ENCODE measurements at regions of chr12 and their contacts with region 1.

Region 1: DNA sequence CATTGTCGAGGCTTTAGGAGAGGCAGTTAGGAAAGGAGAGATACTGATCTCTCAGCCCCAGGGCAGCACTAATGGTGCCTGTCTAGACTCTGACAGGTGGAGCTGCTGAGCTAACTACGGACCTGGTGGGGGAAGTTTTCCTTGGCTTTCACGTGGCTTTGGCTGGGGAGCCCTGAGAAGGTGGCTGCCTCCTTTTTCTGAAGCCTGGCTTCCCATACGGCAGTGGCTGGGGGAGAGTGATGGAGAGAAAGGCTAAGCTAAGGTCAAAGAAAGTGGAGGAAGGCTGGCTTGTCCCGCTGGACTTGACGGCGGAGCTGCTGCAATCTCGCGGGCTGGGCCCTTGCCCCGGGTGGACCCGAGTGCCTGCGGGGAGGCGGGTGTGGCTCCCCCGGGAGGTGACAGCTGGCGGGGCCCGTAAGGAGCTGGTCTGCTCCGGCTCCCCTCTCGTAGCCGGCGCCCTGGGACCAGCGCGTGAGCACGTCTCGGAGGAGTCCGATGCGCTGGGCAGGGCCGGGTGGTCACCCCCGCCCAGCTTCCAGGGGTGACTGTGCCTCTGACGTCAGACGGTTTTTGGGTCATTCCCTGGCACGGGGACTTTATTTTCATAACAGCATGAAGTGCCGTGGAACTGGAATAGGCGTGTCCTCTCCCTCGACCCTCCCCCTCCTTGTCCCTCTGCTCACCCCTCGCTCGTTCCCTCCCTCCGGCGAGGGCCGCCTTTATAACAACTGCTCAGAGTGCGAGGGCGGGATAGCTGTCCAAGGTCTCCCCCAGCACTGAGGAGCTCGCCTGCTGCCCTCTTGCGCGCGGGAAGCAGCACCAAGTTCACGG is at the start of gene GPRC5A:
- DNase-seq: peak; percentile 96
- ATAC-seq: peak; percentile 80
- H3K4me3 ChIP-seq: peak within 1 kb of the TSS; percentile 59 to 91
- H3K27ac ChIP-seq: peak within 1 kb of the TSS; percentile 93
- H3K4me1 ChIP-seq: peaks cover 56 to 90% of the 10 kb centered on the region in 2 experiments
- H3K27me3 ChIP-seq: no peaks in the 10 kb centered on the region
- CTCF ChIP-seq: peak in 2 of 3 experiments; percentile 12 to 15; a peak in 1 of 6 replicates
- POLR2A ChIP-seq: peak; percentile 24
- RAD21 ChIP-seq: no peak
- total RNA-seq, gene GPRC5A: 305 TPM

Region 2: DNA sequence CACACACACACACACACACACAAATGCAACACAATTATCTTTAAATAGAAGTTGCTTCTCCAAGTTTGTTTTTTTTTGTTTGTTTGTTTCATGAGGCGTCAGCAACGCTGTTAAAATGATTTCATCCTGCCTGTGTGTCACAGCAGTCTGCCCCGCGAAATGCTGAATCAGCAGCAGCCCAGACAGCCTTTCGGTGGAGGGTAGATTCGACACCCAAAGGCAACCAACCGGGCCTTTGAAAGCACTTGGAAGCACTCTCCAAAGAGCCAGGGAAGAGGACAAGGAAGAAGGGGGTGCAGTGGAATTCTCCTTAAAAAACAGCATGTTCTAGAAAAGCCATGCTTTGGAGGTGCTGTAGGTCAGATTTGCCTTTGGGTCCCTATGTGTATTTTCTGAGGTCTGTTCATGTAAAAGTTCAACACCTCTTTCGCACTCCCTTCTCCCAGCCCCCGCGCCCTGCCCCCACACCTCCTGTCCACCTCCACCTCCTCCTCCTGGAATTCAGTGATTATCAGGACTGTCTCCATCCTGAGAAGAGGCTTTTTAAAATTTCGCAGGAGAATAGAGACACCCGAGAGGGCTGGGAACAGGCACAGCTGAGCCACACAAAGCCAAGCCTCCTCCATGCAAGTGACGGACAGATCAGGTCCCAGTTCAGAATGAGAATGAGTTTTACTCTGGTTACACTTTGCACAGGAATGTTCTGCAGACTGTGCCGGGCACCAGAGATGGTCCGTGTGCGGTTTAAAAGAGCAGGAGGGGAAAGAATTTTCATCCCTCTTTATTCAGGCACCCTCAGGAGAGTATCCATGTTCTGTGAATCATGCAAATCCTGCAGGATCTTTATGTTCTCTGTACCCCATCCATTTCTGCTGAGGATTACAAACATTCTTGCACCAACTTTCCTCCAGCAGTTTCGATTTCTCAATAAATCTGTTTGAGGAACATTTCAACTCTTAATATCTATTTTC is 1063.7 kb before region 1 on chr12:
- CTCF ChIA-PET with region 1: no interaction called
- POLR2A ChIA-PET with region 1: no interaction called
- RAD21 ChIA-PET with region 1: no interaction called
- intact Hi-C with region 1: no loop called
- DNase-seq: no peak
- ATAC-seq: no peak
- H3K4me3 ChIP-seq: no peak overlapping the region
- H3K27ac ChIP-seq: no peak overlapping the region
- H3K4me1 ChIP-seq: no peaks in the 10 kb centered on the region
- H3K27me3 ChIP-seq: no peaks in the 10 kb centered on the region
- CTCF ChIP-seq: no peak
- POLR2A ChIP-seq: no peak
- RAD21 ChIP-seq: no peak

Region 3: DNA sequence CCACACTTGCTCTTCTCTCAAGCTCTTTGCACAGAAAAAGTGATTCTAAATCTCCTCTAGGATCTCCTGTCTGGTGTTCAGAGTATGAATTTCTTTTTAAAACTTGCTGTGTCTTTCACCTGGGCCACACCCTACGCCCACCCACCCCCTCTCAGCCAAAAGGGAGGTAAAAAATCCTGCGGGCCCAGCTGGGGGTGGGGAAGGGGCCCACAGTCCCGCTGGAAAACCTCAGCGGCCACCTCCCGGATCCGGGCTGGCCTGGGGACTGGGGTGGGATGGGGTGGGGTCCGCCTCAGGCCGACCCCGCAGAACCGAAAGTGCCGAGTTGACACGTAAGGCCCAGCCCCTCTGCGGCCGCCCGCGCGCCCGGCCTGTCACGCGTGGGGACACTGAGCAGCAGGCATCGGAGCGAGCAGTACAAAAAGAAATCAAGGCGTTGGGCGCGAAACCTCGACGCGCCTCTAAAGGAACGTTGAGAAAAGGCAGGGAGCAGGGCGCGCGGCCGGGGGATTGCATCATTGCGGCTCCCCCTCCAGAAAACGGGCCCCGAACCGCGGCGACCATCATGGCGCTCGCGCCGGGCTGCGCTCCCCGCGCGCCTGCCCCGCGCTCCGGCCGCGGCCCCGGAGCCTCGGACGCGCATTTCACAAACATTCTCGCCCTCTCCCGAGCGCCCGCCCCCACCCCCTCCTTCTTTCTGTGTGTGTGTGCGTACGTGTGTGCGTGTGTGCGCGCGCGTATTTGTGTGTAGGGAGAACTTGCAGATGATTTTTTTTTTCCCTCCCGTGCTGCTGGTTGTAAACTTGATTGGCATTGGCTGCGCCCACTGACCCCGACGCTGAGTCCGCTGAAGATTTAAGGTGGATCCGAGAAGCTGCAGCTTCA is 166.1 kb before region 1 on chr12:
- CTCF ChIA-PET with region 1: no interaction called
- POLR2A ChIA-PET with region 1: interaction called, 3 read pairs
- RAD21 ChIA-PET with region 1: no interaction called
- intact Hi-C with region 1: loop called (anchors 10 kb)
- DNase-seq: peak; percentile 98
- ATAC-seq: peak; percentile 67
- H3K4me3 ChIP-seq: peak overlapping the region; percentile 62 to 81
- H3K27ac ChIP-seq: peak overlapping the region; percentile 100
- H3K4me1 ChIP-seq: peaks cover 27 to 33% of the 10 kb centered on the region in 2 experiments
- H3K27me3 ChIP-seq: no peaks in the 10 kb centered on the region
- CTCF ChIP-seq: no peak
- POLR2A ChIP-seq: peak; percentile 73
- RAD21 ChIP-seq: no peak

Region 4: DNA sequence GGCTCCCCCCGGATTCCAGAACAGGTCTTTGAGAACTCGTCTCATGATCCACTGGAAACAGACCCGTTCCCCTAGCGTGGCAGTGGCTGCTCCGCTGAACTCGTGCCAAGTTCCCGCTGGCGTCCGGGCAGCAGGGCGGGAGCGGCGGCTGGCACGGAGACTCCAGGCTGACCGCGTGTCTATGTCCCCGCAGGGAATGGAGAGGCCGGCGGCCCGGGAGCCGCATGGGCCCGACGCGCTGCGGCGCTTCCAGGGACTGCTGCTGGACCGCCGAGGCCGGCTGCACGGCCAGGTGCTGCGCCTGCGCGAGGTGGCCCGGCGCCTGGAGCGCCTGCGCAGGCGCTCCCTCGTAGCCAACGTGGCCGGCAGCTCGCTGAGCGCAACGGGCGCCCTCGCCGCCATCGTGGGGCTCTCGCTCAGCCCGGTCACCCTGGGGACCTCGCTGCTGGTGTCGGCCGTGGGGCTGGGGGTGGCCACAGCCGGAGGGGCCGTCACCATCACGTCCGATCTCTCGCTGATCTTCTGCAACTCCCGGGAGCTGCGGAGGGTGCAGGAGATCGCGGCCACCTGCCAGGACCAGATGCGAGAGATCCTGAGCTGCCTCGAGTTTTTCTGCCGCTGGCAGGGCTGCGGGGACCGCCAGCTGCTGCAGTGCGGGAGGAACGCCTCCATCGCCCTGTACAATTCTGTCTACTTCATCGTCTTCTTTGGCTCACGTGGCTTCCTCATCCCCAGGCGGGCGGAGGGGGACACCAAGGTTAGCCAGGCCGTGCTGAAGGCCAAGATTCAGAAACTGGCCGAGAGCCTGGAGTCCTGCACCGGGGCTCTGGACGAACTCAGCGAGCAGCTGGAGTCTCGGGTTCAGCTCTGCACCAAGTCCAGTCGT is 104.1 kb before region 1 on chr12:
- CTCF ChIA-PET with region 1: interaction called, 7 read pairs
- POLR2A ChIA-PET with region 1: interaction called, 4 read pairs
- RAD21 ChIA-PET with region 1: no interaction called
- intact Hi-C with region 1: loop called (anchors 5 kb)
- DNase-seq: no peak
- ATAC-seq: peak; percentile 83
- H3K4me3 ChIP-seq: peak overlapping the region; percentile 20 to 47
- H3K27ac ChIP-seq: peak overlapping the region; percentile 21; the same call in 1 of the 2 replicates
- H3K4me1 ChIP-seq: peaks cover 6 to 47% of the 10 kb centered on the region in 2 experiments; a peak in 3 of 4 replicates
- H3K27me3 ChIP-seq: no peaks in the 10 kb centered on the region
- CTCF ChIP-seq: no peak
- POLR2A ChIP-seq: no peak
- RAD21 ChIP-seq: no peak

Region 5: DNA sequence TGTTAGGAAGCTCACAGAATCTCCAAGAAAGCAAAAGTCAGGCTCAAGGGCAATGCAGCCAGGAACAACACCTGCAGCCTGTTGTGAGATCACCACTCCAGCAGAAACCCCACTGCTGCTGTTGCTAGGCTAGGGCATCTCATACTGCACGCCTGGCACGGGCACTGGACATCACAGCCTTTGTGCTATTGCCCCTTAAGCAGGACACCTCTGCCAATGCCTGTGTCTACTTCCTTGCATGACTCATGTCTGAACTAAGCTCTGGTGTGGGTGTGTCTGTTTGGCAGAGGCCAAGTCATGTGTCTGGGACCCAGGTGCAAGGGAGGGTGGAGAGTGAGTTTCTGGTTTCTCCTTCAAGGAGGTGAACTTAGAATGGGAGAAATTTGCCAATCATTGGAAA is 87.8 kb before region 1 on chr12:
- CTCF ChIA-PET with region 1: no interaction called
- POLR2A ChIA-PET with region 1: interaction called, 21 read pairs
- RAD21 ChIA-PET with region 1: no interaction called
- intact Hi-C with region 1: no loop called
- DNase-seq: peak; percentile 92
- ATAC-seq: peak; percentile 94
- H3K4me3 ChIP-seq: peak overlapping the region in 1 of 2 experiments; percentile 45; a peak in 2 of 4 replicates
- H3K27ac ChIP-seq: peak overlapping the region; percentile 40; the same call in 1 of the 2 replicates
- H3K4me1 ChIP-seq: peaks cover 34 to 64% of the 10 kb centered on the region in 2 experiments
- H3K27me3 ChIP-seq: no peaks in the 10 kb centered on the region
- CTCF ChIP-seq: no peak
- POLR2A ChIP-seq: no peak
- RAD21 ChIP-seq: peak; percentile 18; the same call in 1 of the 2 replicates

Region 6: GRCh38 chr12:12813120-12814101 is 77.6 kb before region 1 on chr12 and contains the start of gene DDX47:
- CTCF ChIA-PET with region 1: no interaction called
- POLR2A ChIA-PET with region 1: interaction called, 6 read pairs
- RAD21 ChIA-PET with region 1: interaction called in 1 of 2 experiments, 4 read pairs
- intact Hi-C with region 1: loop called (anchors 2 kb)
- DNase-seq: peak; percentile 82
- ATAC-seq: peak; percentile 93
- H3K4me3 ChIP-seq: peak within 1 kb of the TSS; percentile 91 to 95
- H3K27ac ChIP-seq: peak within 1 kb of the TSS; percentile 67
- H3K4me1 ChIP-seq: peaks cover 12 to 61% of the 10 kb centered on the region in 2 experiments; a peak in 3 of 4 replicates
- H3K27me3 ChIP-seq: no peaks in the 10 kb centered on the region
- CTCF ChIP-seq: peak; percentile 86 to 90 (median 88)
- POLR2A ChIP-seq: peak; percentile 65
- RAD21 ChIP-seq: peak; percentile 63
- total RNA-seq, gene DDX47: 103 TPM

Region 7: GRCh38 chr12:12837025-12837872 is 53.8 kb before region 1 on chr12:
- CTCF ChIA-PET with region 1: interaction called, 29 read pairs
- POLR2A ChIA-PET with region 1: interaction called, 66 read pairs
- RAD21 ChIA-PET with region 1: interaction called, 10 to 12 read pairs
- intact Hi-C with region 1: loop called (anchors 1 kb)
- DNase-seq: peak; percentile 67
- ATAC-seq: peak; percentile 38
- H3K4me3 ChIP-seq: no peak overlapping the region
- H3K27ac ChIP-seq: peak overlapping the region; percentile 85
- H3K4me1 ChIP-seq: peaks cover 77 to 99% of the 10 kb centered on the region in 2 experiments
- H3K27me3 ChIP-seq: no peaks in the 10 kb centered on the region
- CTCF ChIP-seq: peak; percentile 43 to 77 (median 71); a peak in 5 of 6 replicates
- POLR2A ChIP-seq: no peak
- RAD21 ChIP-seq: peak; percentile 86

Region 8: GRCh38 chr12:12872139-12872881 is 18.7 kb before region 1 on chr12:
- CTCF ChIA-PET with region 1: interaction called, 3 read pairs
- POLR2A ChIA-PET with region 1: interaction called, 56 read pairs
- RAD21 ChIA-PET with region 1: interaction called in 1 of 2 experiments, 3 read pairs
- intact Hi-C with region 1: loop called (anchors 1 kb)
- DNase-seq: peak; percentile 87
- ATAC-seq: peak; percentile 71
- H3K4me3 ChIP-seq: peak overlapping the region; percentile 24 to 42
- H3K27ac ChIP-seq: peak overlapping the region; percentile 88
- H3K4me1 ChIP-seq: peaks cover 68 to 91% of the 10 kb centered on the region in 2 experiments
- H3K27me3 ChIP-seq: no peaks in the 10 kb centered on the region
- CTCF ChIP-seq: no peak
- POLR2A ChIP-seq: no peak
- RAD21 ChIP-seq: peak; percentile 24; the same call in 1 of the 2 replicates

Region 9: DNA sequence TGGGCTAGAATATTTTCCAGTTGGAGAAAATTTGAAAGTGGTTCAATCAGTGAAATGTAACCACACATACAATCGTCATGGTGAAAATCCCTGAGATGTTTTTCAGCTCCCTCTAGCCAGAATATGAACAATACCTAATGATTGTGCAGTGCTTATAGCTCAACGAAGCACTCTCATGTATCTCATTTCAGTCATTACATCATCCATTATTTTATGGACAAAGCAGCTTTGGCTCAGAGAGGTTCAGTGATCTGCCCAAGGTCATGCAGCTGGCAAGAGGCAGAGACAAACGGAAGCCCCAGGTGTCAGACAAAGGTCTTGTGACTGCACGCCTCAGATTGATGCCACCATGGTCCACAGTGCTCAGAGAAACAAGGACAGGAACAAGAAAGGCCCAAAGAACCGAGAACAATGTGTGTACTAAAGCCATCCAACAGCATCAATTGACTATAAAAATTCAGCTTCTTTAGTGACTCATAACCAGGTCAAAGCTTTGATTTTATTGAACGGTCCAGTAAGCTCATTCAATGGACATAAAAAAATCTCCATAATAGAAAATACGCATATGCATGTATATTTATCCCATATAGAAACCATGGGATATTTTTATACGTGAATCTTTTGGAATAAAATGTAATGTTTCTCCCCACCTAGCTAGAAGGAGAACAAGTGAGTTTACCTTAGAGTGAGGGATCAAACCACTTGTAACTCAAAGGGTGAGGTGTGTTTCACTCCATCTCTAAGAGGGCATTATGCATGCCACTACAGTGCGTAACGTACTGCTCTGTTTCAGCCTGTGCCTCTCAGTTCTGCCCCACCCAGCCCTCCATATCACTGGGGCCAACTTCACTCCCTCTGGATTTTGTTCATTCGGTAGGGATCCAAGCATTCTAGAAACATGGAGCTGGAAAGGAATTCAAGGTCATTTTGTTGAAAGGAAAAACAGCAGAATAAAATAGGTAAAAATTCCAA is 948.6 kb after region 1 on chr12:
- CTCF ChIA-PET with region 1: no interaction called
- POLR2A ChIA-PET with region 1: no interaction called
- RAD21 ChIA-PET with region 1: no interaction called
- intact Hi-C with region 1: no loop called
- DNase-seq: no peak
- ATAC-seq: no peak
- H3K4me3 ChIP-seq: no peak overlapping the region
- H3K27ac ChIP-seq: no peak overlapping the region
- H3K4me1 ChIP-seq: no peaks in the 10 kb centered on the region
- H3K27me3 ChIP-seq: no peaks in the 10 kb centered on the region
- CTCF ChIP-seq: no peak
- POLR2A ChIP-seq: no peak
- RAD21 ChIP-seq: no peak